ENCODE measurements at regions of chr3 and their contacts with region 1.

Region 1: DNA sequence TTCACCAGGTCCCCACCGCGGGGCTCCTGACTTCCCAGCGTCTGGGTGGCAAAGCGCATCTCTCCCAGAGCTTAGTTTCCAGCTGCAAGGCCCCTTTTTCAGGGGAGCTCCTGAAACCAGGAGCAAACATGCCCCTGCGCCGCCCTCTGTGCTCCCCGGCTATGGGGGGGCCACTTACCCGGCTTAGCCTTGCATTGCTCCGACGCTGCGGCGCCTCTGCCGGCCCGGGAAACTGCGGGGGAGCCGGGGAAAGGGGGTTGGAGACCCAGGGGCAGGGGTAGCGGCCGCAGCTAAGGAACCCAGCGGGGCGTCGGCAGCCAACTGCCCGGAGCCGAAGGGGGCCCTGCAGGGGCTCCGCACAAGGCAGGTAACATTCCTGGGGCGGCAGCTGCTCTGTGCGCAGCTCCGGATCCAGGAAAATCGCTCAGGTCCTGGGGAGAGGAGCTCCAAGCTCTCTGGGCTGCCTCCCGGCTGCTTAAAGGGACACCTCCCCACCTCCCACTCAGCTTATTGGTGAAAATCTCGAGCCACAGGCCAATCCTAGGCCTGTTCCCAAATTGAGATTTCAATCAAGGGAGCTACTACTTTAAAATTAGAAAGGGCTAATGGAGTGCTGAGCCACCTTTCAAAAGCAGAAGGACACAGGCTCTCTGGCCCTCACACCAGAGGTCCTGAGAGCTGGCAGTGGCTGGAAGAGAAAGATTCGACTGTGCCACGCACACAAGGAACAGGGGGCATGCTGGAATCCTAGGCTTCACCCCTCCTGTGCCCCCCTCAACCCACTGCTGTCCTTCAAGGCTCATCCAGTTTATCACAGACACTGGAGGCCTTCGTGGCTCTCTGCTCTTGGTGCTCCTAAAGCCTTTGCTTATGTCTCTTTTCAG is 42.7 kb upstream of the PRICKLE2 start:
- DNase-seq: peak; percentile 94
- H3K4me3 ChIP-seq: peak overlapping the region; percentile 74 to 91 (median 80)
- H3K27ac ChIP-seq: peak overlapping the region; percentile 92 to 97 (median 94)
- H3K4me1 ChIP-seq: peaks cover 0 to 36% (median 27%) of the 10 kb centered on the region in 4 donors
- H3K27me3 ChIP-seq: no peaks in the 10 kb centered on the region
- CTCF ChIP-seq: no peak
- EP300 ChIP-seq: no peak
- POLR2A ChIP-seq: peak; percentile 73 to 88

Region 2: GRCh38 chr3:64030741-64031140 is 237.2 kb before region 1 on chr3:
- intact Hi-C with region 1: loop called (anchors 5 kb)
- DNase-seq: peak; percentile 82
- H3K4me3 ChIP-seq: peak overlapping the region in 3 of 4 donors; percentile 15 to 39 (median 33)
- H3K27ac ChIP-seq: peak overlapping the region in 2 of 4 donors; percentile 38 to 51
- H3K4me1 ChIP-seq: peaks cover 0 to 30% (median 12%) of the 10 kb centered on the region in 4 donors
- H3K27me3 ChIP-seq: no peaks in the 10 kb centered on the region
- CTCF ChIP-seq: peak; percentile 87 to 97 (median 88)
- EP300 ChIP-seq: no peak
- POLR2A ChIP-seq: no peak

Region 3: GRCh38 chr3:64213962-64214379 is 54.0 kb before region 1 on chr3:
- intact Hi-C with region 1: loop called (anchors 2 kb)
- DNase-seq: peak; percentile 90
- H3K4me3 ChIP-seq: peak overlapping the region; percentile 11 to 35 (median 30)
- H3K27ac ChIP-seq: peak overlapping the region; percentile 70 to 90 (median 87)
- H3K4me1 ChIP-seq: peaks cover 0 to 99% (median 92%) of the 10 kb centered on the region in 4 donors
- H3K27me3 ChIP-seq: no peaks in the 10 kb centered on the region
- CTCF ChIP-seq: no peak
- EP300 ChIP-seq: peak in 1 of 4 donors; percentile 22
- POLR2A ChIP-seq: no peak

Region 4: DNA sequence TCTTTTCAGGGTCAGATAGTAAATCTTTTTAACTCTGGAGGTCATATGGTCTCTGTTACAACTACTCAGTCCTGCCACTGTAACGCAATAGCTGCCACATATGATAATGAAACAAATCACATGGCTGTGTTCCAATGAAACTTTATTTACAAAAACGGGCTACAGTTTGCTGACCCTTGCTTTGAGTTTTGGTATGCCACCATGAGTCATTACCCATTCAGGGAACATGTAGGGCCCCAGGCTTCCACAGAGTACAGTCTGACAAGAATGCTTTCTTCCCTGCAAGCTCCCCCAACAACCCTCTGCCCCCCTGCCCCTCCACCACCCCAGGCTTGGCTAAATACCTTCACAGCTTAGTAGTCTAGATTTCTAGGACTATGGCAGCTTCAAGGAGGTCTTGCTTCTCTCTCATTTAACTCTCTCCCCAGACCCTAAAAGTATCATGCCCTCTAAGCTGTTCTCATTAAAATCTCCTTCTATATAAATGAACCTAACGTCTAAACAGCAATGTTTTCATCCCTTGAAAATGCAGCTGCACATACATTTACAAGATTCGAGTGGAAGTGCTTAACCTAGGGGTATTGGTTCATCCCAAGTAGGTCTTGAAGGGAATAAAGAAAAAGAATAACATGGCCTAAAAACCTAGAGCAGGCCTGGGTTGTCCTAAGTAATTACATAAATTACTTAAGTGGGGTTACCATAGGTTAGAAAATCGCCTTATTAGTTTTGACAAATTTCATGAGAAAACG is 75.2 kb after region 1 on chr3:
- intact Hi-C with region 1: loop called (anchors 5 kb)
- DNase-seq: no peak
- H3K4me3 ChIP-seq: no peak overlapping the region
- H3K27ac ChIP-seq: peak overlapping the region; percentile 76 to 90 (median 85)
- H3K4me1 ChIP-seq: peaks cover 0 to 60% (median 56%) of the 10 kb centered on the region in 4 donors
- H3K27me3 ChIP-seq: no peaks in the 10 kb centered on the region
- CTCF ChIP-seq: no peak
- EP300 ChIP-seq: no peak
- POLR2A ChIP-seq: no peak

Region 5: DNA sequence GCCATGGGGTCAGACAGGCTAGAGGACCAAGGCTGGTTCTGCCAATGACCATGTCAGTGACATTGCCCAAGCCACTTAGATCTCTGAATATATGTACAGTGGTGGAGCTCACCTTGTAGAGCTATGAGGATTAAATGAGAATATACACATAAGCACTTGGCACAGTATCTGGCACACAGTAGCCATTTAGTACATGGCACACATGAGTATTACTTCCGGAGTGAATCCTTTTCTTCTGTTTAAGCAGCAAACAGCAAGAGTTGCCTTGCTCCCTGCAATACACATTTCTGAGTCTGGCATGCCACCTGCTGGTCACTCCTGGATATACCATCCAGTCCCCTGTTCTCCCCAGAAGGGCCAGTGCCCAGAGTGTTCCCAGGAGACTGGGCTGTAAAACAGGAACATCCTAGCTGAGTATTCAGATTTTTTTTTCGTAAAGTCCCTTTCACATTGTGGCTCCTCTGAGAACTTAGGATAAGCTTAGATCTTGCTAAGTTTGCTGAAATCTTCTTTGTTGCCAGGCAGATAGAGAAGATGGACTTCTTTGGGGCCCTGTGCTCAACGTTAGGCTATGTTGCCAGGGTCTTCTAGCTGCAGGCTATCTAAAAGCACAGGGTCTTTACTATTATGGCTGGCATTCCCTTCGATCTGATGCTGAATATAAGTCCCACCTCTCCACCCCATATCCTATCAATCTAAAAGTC is 216.5 kb after region 1 on chr3:
- intact Hi-C with region 1: loop called (anchors 10 kb)
- DNase-seq: peak; percentile 87
- H3K4me3 ChIP-seq: no peak overlapping the region
- H3K27ac ChIP-seq: no peak overlapping the region
- H3K4me1 ChIP-seq: peaks cover 0 to 9% (median 3%) of the 10 kb centered on the region in 4 donors
- H3K27me3 ChIP-seq: no peaks in the 10 kb centered on the region
- CTCF ChIP-seq: peak; percentile 80 to 90 (median 84)
- EP300 ChIP-seq: no peak
- POLR2A ChIP-seq: no peak

Measured in sigmoid colon (tissue), 7 donors.